Breast epithelium (tissue), 4 donors: ENCODE measurements at regions of chr3 and their contacts with region 1.

Region 1: DNA sequence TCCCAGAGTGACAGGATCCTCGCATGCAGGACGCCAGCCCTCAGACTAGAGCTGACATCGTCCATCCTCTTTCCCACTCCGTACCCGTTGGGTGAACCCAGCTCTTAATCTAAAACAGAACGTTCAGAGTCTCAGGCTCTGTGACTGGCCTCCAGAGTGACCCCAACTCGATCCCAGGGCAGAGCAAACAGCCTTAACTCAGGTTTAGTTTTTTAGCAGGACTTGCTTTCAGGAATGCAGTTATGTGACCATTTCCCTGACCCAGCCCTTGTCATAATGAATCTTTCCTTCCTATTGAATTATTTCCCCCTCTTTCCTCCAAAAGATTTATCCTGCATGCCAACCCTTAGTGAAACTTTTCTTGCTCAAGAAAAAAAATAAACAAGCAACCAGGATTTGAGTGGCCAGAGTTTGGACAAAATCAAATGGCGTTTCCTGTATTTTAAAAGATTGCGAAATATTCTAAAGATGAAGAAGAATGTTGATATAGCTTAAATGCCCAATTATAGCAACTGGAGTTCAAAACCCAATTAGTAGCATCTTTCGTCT is 47.8 kb upstream of the RARB start:
- DNase-seq: no peak
- H3K4me3 ChIP-seq: no peak overlapping the region
- H3K27ac ChIP-seq: no peak overlapping the region
- H3K4me1 ChIP-seq: no peaks in the 10 kb centered on the region
- H3K27me3 ChIP-seq: no peaks in the 10 kb centered on the region
- CTCF ChIP-seq: no peak
- POLR2A ChIP-seq: no peak

Region 2: DNA sequence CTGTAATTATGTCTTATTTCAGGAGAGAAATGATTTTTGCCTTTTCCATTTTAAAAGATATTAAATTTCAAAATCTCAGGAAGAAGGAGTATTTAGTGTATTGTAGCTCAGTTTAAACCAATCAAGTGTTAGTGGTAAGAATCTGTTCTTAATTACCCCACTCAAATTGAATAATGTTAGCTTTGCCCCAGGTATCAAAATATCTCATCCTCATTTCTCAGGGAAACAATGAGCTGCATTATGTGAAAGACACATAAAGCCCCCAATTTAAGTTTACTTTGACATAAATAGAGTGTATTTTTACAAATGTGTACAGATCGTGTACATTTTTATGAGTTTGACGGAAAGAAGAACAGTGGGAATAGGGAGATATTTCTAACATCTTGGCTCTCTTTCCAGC is 269.7 kb before region 1 on chr3:
- intact Hi-C with region 1: loop called (anchors 5 kb)
- DNase-seq: no peak
- H3K4me3 ChIP-seq: no peak overlapping the region
- H3K27ac ChIP-seq: no peak overlapping the region
- H3K4me1 ChIP-seq: no peaks in the 10 kb centered on the region
- H3K27me3 ChIP-seq: no peaks in the 10 kb centered on the region
- CTCF ChIP-seq: no peak
- POLR2A ChIP-seq: no peak

Region 3: GRCh38 chr3:25397150-25397549 is 16.9 kb after region 1 on chr3:
- intact Hi-C with region 1: no loop called
- DNase-seq: no peak
- H3K4me3 ChIP-seq: no peak overlapping the region
- H3K27ac ChIP-seq: no peak overlapping the region
- H3K4me1 ChIP-seq: no peaks in the 10 kb centered on the region
- H3K27me3 ChIP-seq: no peaks in the 10 kb centered on the region
- CTCF ChIP-seq: no peak
- POLR2A ChIP-seq: no peak